GM10248 (cell line): ENCODE measurements at regions of chr15 and their contacts with region 1.

Region 1: GRCh38 chr15:90320061-90320884 is 31.8 kb upstream of the ZNF774 start:
- DNase-seq: peak; percentile 87
- CTCF ChIP-seq: peak; percentile 95

Region 2: GRCh38 chr15:90300988-90301706 is 19.1 kb before region 1 on chr15:
- CTCF ChIA-PET with region 1: interaction called, 61 read pairs
- POLR2A ChIA-PET with region 1: no interaction called
- DNase-seq: peak; percentile 48
- CTCF ChIP-seq: peak; percentile 80

Region 3: GRCh38 chr15:90345857-90346256 is 25.6 kb after region 1 on chr15:
- CTCF ChIA-PET with region 1: interaction called, 11 read pairs
- POLR2A ChIA-PET with region 1: no interaction called
- DNase-seq: no peak
- CTCF ChIP-seq: no peak

Region 4: GRCh38 chr15:90376789-90377188 is 56.5 kb after region 1 on chr15:
- CTCF ChIA-PET with region 1: interaction called, 16 read pairs
- POLR2A ChIA-PET with region 1: no interaction called
- DNase-seq: no peak
- CTCF ChIP-seq: no peak

Region 5: GRCh38 chr15:90471769-90472168 is 151.5 kb after region 1 on chr15:
- CTCF ChIA-PET with region 1: interaction called, 33 read pairs
- POLR2A ChIA-PET with region 1: no interaction called
- DNase-seq: no peak
- CTCF ChIP-seq: no peak

Region 6: DNA sequence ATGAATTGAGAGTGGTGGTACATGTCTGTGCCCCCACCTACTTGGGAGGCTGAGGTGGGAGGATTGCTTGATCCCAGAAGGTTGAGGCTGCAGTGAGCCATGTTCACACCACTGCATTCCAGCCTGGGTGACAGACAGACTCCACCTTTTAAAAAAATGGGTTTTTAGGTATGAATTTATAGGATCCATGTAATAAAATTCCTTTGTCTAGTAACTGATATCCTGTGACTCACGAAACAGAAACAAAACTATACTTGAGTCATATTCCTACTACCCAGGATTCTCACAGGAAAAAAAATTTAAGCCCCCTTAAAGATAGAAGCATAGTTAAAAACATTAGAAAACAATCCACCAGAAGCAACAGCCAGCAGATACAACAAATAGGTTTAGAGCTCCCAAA is 199.4 kb after region 1 on chr15:
- CTCF ChIA-PET with region 1: interaction called, 12 read pairs
- POLR2A ChIA-PET with region 1: no interaction called
- DNase-seq: no peak
- CTCF ChIP-seq: no peak

Region 7: DNA sequence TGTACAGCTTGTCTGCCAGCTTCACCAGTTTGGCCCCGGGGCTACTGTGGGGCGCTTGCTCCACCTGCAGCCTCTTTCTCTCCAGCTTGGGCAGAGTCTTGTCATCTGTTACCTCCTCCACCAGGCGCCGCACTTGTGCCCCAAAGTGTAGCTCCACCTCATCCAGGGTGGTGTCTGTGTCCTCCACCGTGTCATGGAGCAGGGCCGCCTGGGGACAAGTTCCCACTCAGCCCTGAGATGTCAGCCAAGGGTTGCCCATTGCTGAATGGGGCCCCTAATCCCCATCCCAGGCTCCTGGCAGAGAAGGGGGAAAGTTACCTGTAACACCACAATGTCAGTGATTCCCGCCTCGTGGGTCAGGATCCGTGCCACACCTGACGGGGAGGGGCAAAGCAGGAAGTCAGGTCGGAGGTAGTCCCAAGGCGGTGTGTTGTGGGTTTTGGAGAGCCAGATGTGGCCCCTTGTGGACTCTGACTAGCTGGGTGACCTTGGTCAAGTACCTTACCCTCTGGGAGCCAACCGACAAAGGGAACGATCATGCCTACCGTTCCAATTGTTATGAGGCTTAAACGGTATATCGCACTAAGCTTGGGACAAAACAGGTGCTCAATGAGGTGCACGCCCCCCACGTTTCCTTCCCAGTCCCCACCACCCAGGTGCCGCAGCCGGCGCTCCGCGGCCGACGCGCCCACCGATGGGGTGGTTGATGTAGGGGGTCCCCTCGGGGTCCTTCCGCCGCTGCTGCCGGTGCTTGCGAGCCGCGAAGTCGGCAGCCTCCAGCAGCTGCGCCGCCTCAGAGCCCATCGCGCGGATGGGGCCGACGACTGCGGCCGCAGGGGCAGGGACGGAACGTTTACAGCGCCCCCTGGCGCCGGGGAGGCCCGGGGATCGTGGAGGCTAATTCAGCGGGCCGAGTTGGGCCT is 611.7 kb after region 1 on chr15 and contains the start of gene HDDC3:
- CTCF ChIA-PET with region 1: interaction called, 32 read pairs
- POLR2A ChIA-PET with region 1: no interaction called
- DNase-seq: peak; percentile 90
- CTCF ChIP-seq: peak; percentile 98